CD4-positive, alpha-beta memory T cell (primary cell): ENCODE measurements at regions of chr6 and their contacts with region 1.

Region 1: DNA sequence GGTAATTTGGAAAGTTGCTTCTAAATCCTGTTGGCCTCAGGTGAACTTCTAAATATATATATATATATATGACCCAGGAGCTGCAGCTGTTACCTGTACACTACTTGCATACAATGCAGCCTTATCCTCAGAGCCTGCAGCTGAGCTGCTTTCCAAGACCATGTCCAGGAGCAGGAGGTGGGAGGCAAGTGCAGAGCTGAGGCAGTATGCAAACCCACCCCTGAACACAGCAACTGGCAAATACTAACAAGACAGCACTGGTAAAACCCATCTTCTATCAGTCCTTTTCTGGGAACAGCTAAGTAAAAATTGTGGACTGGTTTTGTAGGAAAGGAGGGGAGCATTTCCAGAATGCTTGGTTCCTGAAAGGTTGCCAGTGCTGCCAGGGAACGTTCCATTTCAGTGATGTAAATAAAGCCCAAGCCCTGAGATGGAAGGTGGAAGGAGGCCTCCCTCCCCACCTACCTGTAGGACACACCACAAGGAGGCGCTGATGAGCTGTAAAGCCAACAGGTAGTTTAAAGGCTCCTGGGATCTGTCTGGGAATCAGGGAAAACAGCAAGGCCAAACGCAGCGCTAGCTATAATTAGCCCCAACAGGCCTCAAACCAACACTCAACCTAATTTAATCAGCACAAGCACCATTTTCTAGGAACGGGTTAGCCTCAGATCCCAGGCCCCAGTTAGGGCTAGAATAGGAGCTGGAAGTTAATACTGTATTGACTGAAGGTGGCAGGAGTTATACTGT is 93.8 kb upstream of the MAP7 start:
- DNase-seq: peak; percentile 68 to 76 (median 70)
- H3K4me3 ChIP-seq: no peak overlapping the region
- H3K4me3 Mint-ChIP-seq: no peak overlapping the region
- H3K27ac ChIP-seq: peak overlapping the region; percentile 4
- H3K27ac Mint-ChIP-seq: peak overlapping the region; percentile 30 to 75 (median 61)
- H3K4me1 ChIP-seq: peaks cover 19% of the 10 kb centered on the region
- H3K4me1 Mint-ChIP-seq: peaks cover 0 to 5% (median 4%) of the 10 kb centered on the region in 4 donors
- H3K27me3 ChIP-seq: no peaks in the 10 kb centered on the region
- H3K27me3 Mint-ChIP-seq: no peaks in the 10 kb centered on the region

Region 2: GRCh38 chr6:136607932-136608772 is 35.9 kb before region 1 on chr6:
- CTCF ChIA-PET with region 1: interaction called, 15 read pairs
- POLR2A ChIA-PET with region 1: no interaction called
- intact Hi-C with region 1: loop called (anchors 1 kb)
- DNase-seq: peak; percentile 70 to 76 (median 75)
- H3K4me3 ChIP-seq: no peak overlapping the region
- H3K4me3 Mint-ChIP-seq: no peak overlapping the region
- H3K27ac ChIP-seq: no peak overlapping the region
- H3K27ac Mint-ChIP-seq: peak overlapping the region in 5 of 7 donors; percentile 3 to 55 (median 11)
- H3K4me1 ChIP-seq: no peaks in the 10 kb centered on the region
- H3K4me1 Mint-ChIP-seq: peaks cover 8 to 24% (median 12%) of the 10 kb centered on the region in 4 donors
- H3K27me3 ChIP-seq: no peaks in the 10 kb centered on the region
- H3K27me3 Mint-ChIP-seq: no peaks in the 10 kb centered on the region

Region 3: DNA sequence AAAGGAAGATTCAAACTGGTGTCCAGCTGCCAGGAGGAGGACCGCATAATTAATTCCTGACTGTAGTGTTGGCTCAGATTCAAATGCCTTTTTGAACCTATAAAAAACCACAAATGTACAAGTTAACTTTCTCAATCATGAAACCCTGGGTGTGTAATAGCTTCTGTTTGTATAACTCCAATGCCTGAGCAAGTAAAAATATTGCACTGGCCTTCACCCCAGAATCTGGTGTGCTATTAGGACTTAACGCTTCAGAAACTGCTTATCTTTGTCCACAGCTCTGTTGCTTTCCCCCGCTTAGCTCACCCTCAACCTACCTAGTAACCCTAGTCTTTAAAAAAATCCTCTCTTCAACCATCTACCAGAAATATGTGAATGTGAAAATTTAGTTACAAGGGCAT is 25.3 kb after region 1 on chr6:
- CTCF ChIA-PET with region 1: interaction called, 10 read pairs
- POLR2A ChIA-PET with region 1: interaction called, 3 read pairs
- intact Hi-C with region 1: no loop called
- DNase-seq: no peak
- H3K4me3 ChIP-seq: no peak overlapping the region
- H3K4me3 Mint-ChIP-seq: no peak overlapping the region
- H3K27ac ChIP-seq: no peak overlapping the region
- H3K27ac Mint-ChIP-seq: no peak overlapping the region
- H3K4me1 ChIP-seq: no peaks in the 10 kb centered on the region
- H3K4me1 Mint-ChIP-seq: peaks cover 0 to 4% (median 0%) of the 10 kb centered on the region in 4 donors
- H3K27me3 ChIP-seq: no peaks in the 10 kb centered on the region
- H3K27me3 Mint-ChIP-seq: no peaks in the 10 kb centered on the region

Region 4: GRCh38 chr6:136706420-136706819 is 62.4 kb after region 1 on chr6:
- CTCF ChIA-PET with region 1: interaction called, 34 read pairs
- POLR2A ChIA-PET with region 1: no interaction called
- intact Hi-C with region 1: loop called (anchors 2 kb)
- DNase-seq: no peak
- H3K4me3 ChIP-seq: no peak overlapping the region
- H3K4me3 Mint-ChIP-seq: no peak overlapping the region
- H3K27ac ChIP-seq: no peak overlapping the region
- H3K27ac Mint-ChIP-seq: peak overlapping the region in 2 of 7 donors; percentile 27 to 50
- H3K4me1 ChIP-seq: no peaks in the 10 kb centered on the region
- H3K4me1 Mint-ChIP-seq: peaks cover 24 to 27% (median 25%) of the 10 kb centered on the region in 4 donors
- H3K27me3 ChIP-seq: no peaks in the 10 kb centered on the region
- H3K27me3 Mint-ChIP-seq: no peaks in the 10 kb centered on the region

Region 5: GRCh38 chr6:136745300-136745699 is 101.3 kb after region 1 on chr6:
- CTCF ChIA-PET with region 1: interaction called, 25 read pairs
- POLR2A ChIA-PET with region 1: no interaction called
- intact Hi-C with region 1: loop called (anchors 5 kb)
- DNase-seq: no peak
- H3K4me3 ChIP-seq: no peak overlapping the region
- H3K4me3 Mint-ChIP-seq: no peak overlapping the region
- H3K27ac ChIP-seq: no peak overlapping the region
- H3K27ac Mint-ChIP-seq: peak overlapping the region in 2 of 7 donors; percentile 35 to 71
- H3K4me1 ChIP-seq: peaks cover 54% of the 10 kb centered on the region
- H3K4me1 Mint-ChIP-seq: peaks cover 41 to 78% (median 60%) of the 10 kb centered on the region in 4 donors
- H3K27me3 ChIP-seq: no peaks in the 10 kb centered on the region
- H3K27me3 Mint-ChIP-seq: no peaks in the 10 kb centered on the region

Region 6: DNA sequence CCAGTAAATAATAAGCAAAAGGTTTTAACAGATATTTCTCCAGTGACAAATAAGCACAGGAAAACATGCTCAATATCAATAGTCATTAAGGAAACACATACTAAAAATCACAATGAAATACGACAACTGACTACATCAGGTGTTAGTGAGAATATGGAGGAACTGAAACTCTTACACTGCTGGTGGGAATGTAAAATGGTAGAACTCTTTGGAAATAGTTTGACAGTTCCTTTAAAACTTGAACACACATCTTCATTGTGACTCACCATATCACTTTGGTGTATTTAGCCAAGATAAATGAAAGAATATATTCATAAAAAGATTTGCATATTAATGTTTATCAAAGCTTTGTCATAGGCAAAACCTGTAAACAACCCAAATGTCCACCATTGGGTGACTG is 159.6 kb after region 1 on chr6:
- CTCF ChIA-PET with region 1: interaction called, 747 read pairs
- POLR2A ChIA-PET with region 1: no interaction called
- intact Hi-C with region 1: no loop called
- DNase-seq: no peak
- H3K4me3 ChIP-seq: no peak overlapping the region
- H3K4me3 Mint-ChIP-seq: no peak overlapping the region
- H3K27ac ChIP-seq: no peak overlapping the region
- H3K27ac Mint-ChIP-seq: no peak overlapping the region
- H3K4me1 ChIP-seq: no peaks in the 10 kb centered on the region
- H3K4me1 Mint-ChIP-seq: no peaks in the 10 kb centered on the region
- H3K27me3 ChIP-seq: no peaks in the 10 kb centered on the region
- H3K27me3 Mint-ChIP-seq: peaks cover 1 to 4% of the 10 kb centered on the region in 2 donors

Region 7: DNA sequence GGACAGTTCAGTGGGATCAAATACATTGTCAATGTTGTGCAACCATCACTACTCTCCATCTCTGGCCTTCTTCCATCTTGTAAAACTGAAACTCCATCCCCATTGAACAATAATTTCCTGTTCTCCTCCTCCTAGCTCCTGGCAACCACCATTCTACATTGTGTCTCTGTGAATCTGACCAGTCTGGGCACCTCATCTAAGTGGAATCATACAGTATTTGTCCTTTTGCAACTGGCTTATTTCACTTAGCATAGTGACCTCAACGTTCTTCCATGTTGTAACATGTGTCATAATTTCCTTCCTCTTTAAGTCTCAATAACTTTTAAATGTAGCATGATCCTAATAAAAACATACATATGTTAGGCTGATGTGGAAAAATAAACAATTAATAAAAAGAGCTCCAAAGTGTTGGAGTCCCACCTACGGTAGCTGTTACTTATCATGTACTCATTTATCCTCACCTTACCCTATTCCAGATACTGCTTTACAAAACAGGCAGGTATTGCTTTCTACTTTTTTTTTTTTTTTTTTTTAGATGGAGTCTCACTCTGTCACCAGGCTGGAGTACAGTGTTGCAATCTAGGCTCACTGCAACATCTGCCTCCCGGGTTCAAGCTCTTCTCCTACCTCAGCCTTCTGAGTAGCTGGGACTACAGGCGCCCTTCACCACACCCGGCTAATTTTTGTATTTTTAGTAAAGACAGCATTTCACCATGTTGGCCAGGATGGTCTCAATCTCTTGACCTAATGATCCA is 1315.0 kb after region 1 on chr6:
- CTCF ChIA-PET with region 1: no interaction called
- POLR2A ChIA-PET with region 1: no interaction called
- intact Hi-C with region 1: no loop called
- DNase-seq: no peak
- H3K4me3 ChIP-seq: no peak overlapping the region
- H3K4me3 Mint-ChIP-seq: no peak overlapping the region
- H3K27ac ChIP-seq: no peak overlapping the region
- H3K27ac Mint-ChIP-seq: no peak overlapping the region
- H3K4me1 ChIP-seq: peaks cover 4% of the 10 kb centered on the region
- H3K4me1 Mint-ChIP-seq: peaks cover 0 to 6% (median 4%) of the 10 kb centered on the region in 4 donors
- H3K27me3 ChIP-seq: no peaks in the 10 kb centered on the region
- H3K27me3 Mint-ChIP-seq: no peaks in the 10 kb centered on the region